Activated CD8-positive, alpha-beta T cell treated with anti-CD3 and anti-CD28 coated beads, Interleukin-2, amount 10 ng/mL, durations not matched to agents 7 days and 5 days (primary cell): ENCODE measurements at regions of chr4 and their contacts with region 1.

Region 1: DNA sequence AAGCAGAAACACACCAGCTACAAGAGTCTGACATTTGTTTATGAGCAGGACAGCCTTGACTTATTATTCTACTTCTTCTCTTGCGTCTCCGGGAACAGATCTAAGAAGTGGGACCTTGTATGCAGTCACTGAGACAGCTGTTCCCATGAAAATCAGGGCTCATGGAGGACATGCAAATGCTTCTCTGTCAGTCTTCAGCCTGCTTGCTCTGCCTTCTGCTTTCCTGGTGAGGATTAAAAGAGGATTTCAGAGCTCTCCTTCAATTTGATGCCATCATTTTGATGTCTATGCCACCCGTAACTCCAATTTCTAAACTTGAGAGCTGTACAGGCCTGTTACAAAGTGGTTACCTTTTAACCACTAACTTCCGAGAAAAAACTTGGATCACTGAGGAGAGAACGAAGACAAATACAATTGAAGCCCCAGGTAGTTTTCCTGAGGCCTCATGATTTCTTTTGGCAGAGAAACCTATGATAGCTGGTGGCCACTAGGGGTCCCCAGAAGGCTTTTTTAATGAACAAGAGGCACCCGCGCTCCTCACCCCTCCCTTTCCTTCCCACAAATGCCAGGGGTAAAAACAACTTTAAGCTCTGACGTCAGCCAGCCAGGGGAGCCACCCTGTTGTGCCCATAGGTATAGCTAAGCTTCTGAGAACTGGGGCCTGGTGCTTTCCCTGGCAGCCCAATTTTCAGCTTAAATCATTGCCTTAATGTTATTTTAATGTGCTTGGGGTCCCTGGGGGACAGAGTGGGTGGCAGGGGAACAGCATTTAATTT is 97.0 kb downstream of the DDIT4L start:
- DNase-seq: peak; percentile 90
- ATAC-seq: peak; percentile 99
- H3K4me3 Mint-ChIP-seq: no peak overlapping the region
- H3K27ac Mint-ChIP-seq: peak overlapping the region; percentile 54
- H3K4me1 Mint-ChIP-seq: peaks cover 38% of the 10 kb centered on the region
- H3K27me3 Mint-ChIP-seq: peaks cover 2% of the 10 kb centered on the region

Region 2: GRCh38 chr4:100063355-100063754 is 29.9 kb before region 1 on chr4:
- CTCF ChIA-PET with region 1: no interaction called
- POLR2A ChIA-PET with region 1: no interaction called
- DNase-seq: no peak
- ATAC-seq: no peak
- H3K4me3 Mint-ChIP-seq: no peak overlapping the region
- H3K27ac Mint-ChIP-seq: no peak overlapping the region
- H3K4me1 Mint-ChIP-seq: no peaks in the 10 kb centered on the region
- H3K27me3 Mint-ChIP-seq: peaks cover 15% of the 10 kb centered on the region

Region 3: DNA sequence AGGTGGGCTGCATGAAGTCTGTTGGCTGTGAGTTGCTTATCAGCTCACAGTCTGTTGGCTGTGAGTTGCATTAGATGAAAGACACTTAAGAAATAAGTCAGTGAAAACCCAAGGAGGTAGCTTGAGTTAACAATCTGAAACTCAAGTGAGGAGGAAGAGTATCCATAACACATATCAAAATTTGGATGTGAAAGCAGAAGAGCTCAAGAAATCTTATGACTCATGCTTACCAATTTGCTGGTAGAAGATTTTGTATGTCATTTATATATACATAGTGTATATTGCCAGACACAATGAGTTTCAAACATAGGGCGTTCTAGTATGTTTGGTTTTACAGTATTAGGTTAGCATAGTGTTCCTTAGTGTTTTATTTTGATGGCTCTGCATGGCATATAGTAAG is 10.4 kb before region 1 on chr4:
- CTCF ChIA-PET with region 1: interaction called, 57 read pairs
- POLR2A ChIA-PET with region 1: no interaction called
- DNase-seq: no peak
- ATAC-seq: no peak
- H3K4me3 Mint-ChIP-seq: no peak overlapping the region
- H3K27ac Mint-ChIP-seq: no peak overlapping the region
- H3K4me1 Mint-ChIP-seq: no peaks in the 10 kb centered on the region
- H3K27me3 Mint-ChIP-seq: no peaks in the 10 kb centered on the region

Region 4: DNA sequence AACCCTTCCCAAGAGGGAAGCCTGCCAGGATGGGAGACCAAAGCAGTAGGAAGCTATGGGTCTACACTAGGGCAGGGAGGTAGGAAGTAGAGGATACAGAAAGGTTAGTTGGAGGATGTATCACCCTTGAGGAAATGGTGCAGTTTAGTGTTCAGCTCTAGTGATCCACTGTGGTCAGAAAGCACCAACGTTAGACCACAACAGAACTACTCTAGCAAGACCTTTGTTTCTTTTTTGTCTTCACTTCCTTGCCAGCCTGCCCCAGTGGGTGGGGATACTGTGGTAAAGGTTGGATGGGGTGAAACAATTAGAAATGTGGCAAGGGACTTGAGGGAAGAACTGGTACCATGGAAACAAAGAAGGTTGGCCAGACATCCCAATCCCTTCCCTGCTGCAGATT is 13.7 kb after region 1 on chr4:
- CTCF ChIA-PET with region 1: interaction called, 155 read pairs
- POLR2A ChIA-PET with region 1: no interaction called
- DNase-seq: peak; percentile 76
- ATAC-seq: peak; percentile 96
- H3K4me3 Mint-ChIP-seq: no peak overlapping the region
- H3K27ac Mint-ChIP-seq: peak overlapping the region; percentile 83
- H3K4me1 Mint-ChIP-seq: peaks cover 46% of the 10 kb centered on the region
- H3K27me3 Mint-ChIP-seq: no peaks in the 10 kb centered on the region

Region 5: GRCh38 chr4:100113732-100114131 is 20.5 kb after region 1 on chr4:
- CTCF ChIA-PET with region 1: interaction called, 155 read pairs
- POLR2A ChIA-PET with region 1: no interaction called
- DNase-seq: no peak
- ATAC-seq: no peak
- H3K4me3 Mint-ChIP-seq: no peak overlapping the region
- H3K27ac Mint-ChIP-seq: no peak overlapping the region
- H3K4me1 Mint-ChIP-seq: peaks cover 12% of the 10 kb centered on the region
- H3K27me3 Mint-ChIP-seq: no peaks in the 10 kb centered on the region

Region 6: GRCh38 chr4:100147198-100147597 is 53.9 kb after region 1 on chr4:
- CTCF ChIA-PET with region 1: interaction called, 10 read pairs
- POLR2A ChIA-PET with region 1: no interaction called
- DNase-seq: no peak
- ATAC-seq: no peak
- H3K4me3 Mint-ChIP-seq: no peak overlapping the region
- H3K27ac Mint-ChIP-seq: no peak overlapping the region
- H3K4me1 Mint-ChIP-seq: peaks cover 8% of the 10 kb centered on the region
- H3K27me3 Mint-ChIP-seq: no peaks in the 10 kb centered on the region

Region 7: DNA sequence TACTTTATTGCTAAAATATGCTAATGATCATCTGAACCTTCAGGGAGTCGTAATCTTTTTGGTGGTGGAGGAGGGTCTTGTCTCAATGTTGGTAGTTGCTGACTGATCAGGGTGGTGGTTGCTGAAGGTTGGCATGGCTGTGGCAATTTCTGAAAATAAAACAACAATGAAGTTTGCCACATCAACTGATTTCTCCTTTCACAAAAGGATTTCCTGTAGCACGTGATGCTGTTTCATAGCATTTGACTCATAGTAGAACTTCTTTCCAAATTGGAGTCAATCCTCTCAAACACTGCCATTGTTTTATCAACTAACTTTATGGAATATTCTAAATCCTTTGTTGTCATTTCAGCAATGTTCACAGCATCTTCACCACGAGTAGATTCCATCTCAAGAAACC is 77.7 kb after region 1 on chr4:
- CTCF ChIA-PET with region 1: interaction called, 10 read pairs
- POLR2A ChIA-PET with region 1: interaction called, 4 read pairs
- DNase-seq: no peak
- ATAC-seq: no peak
- H3K4me3 Mint-ChIP-seq: no peak overlapping the region
- H3K27ac Mint-ChIP-seq: no peak overlapping the region
- H3K4me1 Mint-ChIP-seq: peaks cover 13% of the 10 kb centered on the region
- H3K27me3 Mint-ChIP-seq: no peaks in the 10 kb centered on the region

Region 8: DNA sequence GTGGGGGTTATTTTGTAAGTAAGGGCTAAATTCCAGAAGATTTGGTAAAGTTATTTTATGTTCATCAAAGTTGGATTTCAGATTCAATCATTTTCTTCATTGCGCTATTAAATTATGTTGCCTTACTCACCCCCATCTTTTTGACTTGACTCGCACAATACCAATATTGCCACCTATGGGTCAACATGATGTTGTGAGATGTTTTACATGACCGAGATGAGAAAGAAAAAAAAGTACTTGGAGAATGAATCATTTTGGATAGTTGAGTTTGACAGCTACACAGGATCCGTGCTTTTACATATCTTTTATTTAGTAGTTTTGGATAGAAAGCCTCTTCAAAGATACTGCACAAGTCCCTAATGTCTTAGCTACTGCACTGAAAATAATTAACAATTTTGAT is 648.8 kb after region 1 on chr4:
- CTCF ChIA-PET with region 1: interaction called, 11 read pairs
- POLR2A ChIA-PET with region 1: no interaction called
- DNase-seq: no peak
- ATAC-seq: no peak
- H3K4me3 Mint-ChIP-seq: no peak overlapping the region
- H3K27ac Mint-ChIP-seq: no peak overlapping the region
- H3K4me1 Mint-ChIP-seq: no peaks in the 10 kb centered on the region
- H3K27me3 Mint-ChIP-seq: peaks cover 2% of the 10 kb centered on the region